Left ventricle myocardium inferior (tissue), 1 donor: ENCODE measurements at regions of chr15 and their contacts with region 1.

Region 1: DNA sequence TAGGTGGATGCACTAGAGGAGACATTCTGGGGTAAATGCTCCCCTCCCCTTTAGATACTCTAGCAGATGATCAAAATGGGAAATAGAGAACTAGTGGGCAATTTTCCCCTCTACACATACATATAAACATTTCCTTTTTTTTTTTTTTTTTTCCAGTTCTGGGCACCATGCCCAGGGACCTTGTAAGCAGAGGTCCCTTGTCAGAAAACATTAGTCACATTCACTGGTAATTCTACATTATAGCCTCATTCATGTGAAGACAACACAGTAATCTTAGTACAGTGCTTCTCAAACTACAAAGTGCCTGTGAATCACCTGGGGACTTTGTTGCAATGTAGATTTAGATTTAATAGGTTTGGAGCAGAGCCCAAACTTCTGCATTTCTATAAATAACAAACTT is 60.0 kb upstream of the ACTC1 start:
- DNase-seq: no peak
- H3K4me3 ChIP-seq: no peak overlapping the region
- H3K27ac ChIP-seq: peak overlapping the region; percentile 38
- H3K4me1 ChIP-seq: peaks cover 33% of the 10 kb centered on the region
- H3K27me3 ChIP-seq: no peaks in the 10 kb centered on the region
- CTCF ChIP-seq: no peak

Region 2: GRCh38 chr15:34799149-34800101 is 56.0 kb before region 1 on chr15:
- intact Hi-C with region 1: loop called (anchors 10 kb)
- DNase-seq: peak; percentile 85
- H3K4me3 ChIP-seq: peak overlapping the region; percentile 45
- H3K27ac ChIP-seq: peak overlapping the region; percentile 93
- H3K4me1 ChIP-seq: peaks cover 53% of the 10 kb centered on the region
- H3K27me3 ChIP-seq: peaks cover 59% of the 10 kb centered on the region
- CTCF ChIP-seq: no peak

Region 3: GRCh38 chr15:35206060-35206675 is 350.8 kb after region 1 on chr15:
- intact Hi-C with region 1: no loop called
- DNase-seq: no peak
- H3K4me3 ChIP-seq: no peak overlapping the region
- H3K27ac ChIP-seq: no peak overlapping the region
- H3K4me1 ChIP-seq: peaks cover 8% of the 10 kb centered on the region
- H3K27me3 ChIP-seq: no peaks in the 10 kb centered on the region
- CTCF ChIP-seq: no peak